ENCODE measurements at regions of chr22 and their contacts with region 1.

Region 1: GRCh38 chr22:31211862-31212730 is at the start of gene LIMK2:
- DNase-seq: peak; percentile 83 to 98
- H3K4me3 ChIP-seq: peak within 1 kb of the TSS; percentile 76 to 96 (median 93)
- H3K27ac ChIP-seq: peak within 1 kb of the TSS; percentile 73; the same call in 1 of the 2 replicates
- H3K4me1 ChIP-seq: peaks cover 0 to 7% (median 4%) of the 10 kb centered on the region in 4 experiments; a peak in 5 of 7 replicates
- H3K27me3 ChIP-seq: no peaks in the 10 kb centered on the region
- CTCF ChIP-seq: peak; percentile 63 to 82 (median 77)
- EP300 ChIP-seq: no peak
- POLR2A ChIP-seq: peak; percentile 87 to 92
- RAD21 ChIP-seq: peak; percentile 56 to 70
- total RNA-seq, gene LIMK2: 37.6 and 41.1 TPM in 2 replicates

Region 2: DNA sequence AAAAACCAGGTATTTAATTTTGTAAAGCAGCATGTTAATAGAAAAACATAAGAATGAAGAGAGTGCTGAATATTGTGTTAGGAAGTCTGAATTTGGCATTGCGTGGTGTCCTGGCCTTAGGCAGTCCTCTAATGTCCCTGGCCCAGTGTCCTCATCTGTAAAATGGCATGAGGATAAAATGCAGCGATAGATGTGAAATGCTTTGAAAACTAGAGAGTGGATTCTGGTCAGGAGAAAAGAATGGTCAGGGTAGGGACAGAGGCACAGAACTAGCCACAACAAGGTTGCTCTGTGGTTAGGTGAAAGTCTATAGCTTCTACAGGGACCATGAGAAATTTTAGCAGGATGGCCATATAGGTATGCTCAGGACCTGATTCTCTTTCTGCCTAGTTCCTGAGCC is 33.2 kb before region 1 on chr22:
- CTCF ChIA-PET with region 1: no interaction called
- POLR2A ChIA-PET with region 1: no interaction called
- DNase-seq: no peak
- H3K4me3 ChIP-seq: no peak overlapping the region
- H3K27ac ChIP-seq: no peak overlapping the region
- H3K4me1 ChIP-seq: no peaks in the 10 kb centered on the region
- H3K27me3 ChIP-seq: no peaks in the 10 kb centered on the region
- CTCF ChIP-seq: no peak
- EP300 ChIP-seq: no peak
- POLR2A ChIP-seq: no peak
- RAD21 ChIP-seq: no peak

Region 3: GRCh38 chr22:31192513-31192912 is 19.6 kb before region 1 on chr22:
- CTCF ChIA-PET with region 1: interaction called, 16 read pairs
- POLR2A ChIA-PET with region 1: interaction called, 4 read pairs
- DNase-seq: no peak
- H3K4me3 ChIP-seq: no peak overlapping the region
- H3K27ac ChIP-seq: no peak overlapping the region
- H3K4me1 ChIP-seq: no peaks in the 10 kb centered on the region
- H3K27me3 ChIP-seq: no peaks in the 10 kb centered on the region
- CTCF ChIP-seq: no peak
- EP300 ChIP-seq: no peak
- POLR2A ChIP-seq: no peak
- RAD21 ChIP-seq: no peak

Region 4: DNA sequence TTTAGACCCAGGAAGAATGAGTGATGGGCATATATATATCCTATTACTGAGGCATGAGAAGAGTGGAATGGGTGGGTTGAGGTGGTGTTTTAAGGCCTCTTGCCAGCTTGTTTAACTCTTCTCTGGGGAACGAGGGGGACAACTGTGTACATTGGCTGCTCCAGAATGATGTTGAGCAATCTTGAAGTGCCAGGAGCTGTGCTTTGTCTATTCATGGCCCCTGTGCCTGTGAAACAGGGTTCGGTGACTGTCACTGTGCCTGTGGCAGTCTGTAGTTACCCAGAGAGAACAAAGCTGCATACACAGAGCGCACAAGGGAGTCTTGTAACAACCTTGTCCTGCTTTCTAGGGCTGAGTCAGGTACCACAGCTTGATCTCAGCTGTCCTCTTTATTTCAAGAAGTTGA is 11.7 kb after region 1 on chr22:
- CTCF ChIA-PET with region 1: interaction called, 77 read pairs
- POLR2A ChIA-PET with region 1: interaction called, 20 read pairs
- DNase-seq: no peak
- H3K4me3 ChIP-seq: no peak overlapping the region
- H3K27ac ChIP-seq: no peak overlapping the region
- H3K4me1 ChIP-seq: no peaks in the 10 kb centered on the region; a peak in 2 of 7 replicates
- H3K27me3 ChIP-seq: no peaks in the 10 kb centered on the region
- CTCF ChIP-seq: no peak
- EP300 ChIP-seq: no peak
- POLR2A ChIP-seq: no peak
- RAD21 ChIP-seq: no peak

Region 5: DNA sequence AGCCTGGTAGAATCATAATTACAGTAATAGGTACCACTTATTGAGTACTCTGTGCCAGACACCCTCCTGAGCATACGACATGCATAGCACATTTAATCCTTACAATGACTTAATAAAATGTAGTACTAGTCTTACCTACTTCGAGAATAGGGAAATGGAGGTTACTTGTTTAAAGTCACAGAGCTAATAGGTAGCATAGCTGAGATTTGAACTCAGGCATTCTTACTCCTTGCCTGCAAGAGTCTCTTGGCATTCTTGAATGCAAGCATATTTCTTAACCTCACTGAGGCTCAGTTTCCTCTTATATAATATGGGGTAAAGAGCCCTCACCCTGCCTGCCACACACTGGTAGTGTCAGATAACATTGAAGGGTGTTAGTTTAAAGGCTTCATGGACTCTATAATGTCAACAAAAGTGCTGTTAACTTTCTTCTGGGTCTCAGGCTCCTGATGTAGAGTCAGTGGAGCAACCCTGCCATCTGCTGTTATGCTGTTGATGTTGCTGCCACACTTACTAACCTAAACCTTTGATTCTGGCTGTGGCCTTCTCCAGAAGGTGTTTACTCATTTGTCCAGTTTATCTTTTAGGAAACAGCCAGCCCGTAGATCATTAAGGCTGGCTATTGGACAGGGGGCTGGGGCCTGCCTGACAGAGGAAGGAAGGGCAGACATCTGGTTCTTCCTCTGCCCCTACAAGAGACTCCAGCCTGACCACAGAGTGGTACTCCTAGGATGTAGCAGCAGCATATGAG is 18.9 kb after region 1 on chr22:
- CTCF ChIA-PET with region 1: interaction called, 77 read pairs
- POLR2A ChIA-PET with region 1: interaction called, 20 read pairs
- DNase-seq: no peak
- H3K4me3 ChIP-seq: no peak overlapping the region
- H3K27ac ChIP-seq: no peak overlapping the region
- H3K4me1 ChIP-seq: peaks cover 0 to 5% (median 2%) of the 10 kb centered on the region in 4 experiments; a peak in 3 of 7 replicates
- H3K27me3 ChIP-seq: no peaks in the 10 kb centered on the region
- CTCF ChIP-seq: peak in 2 of 3 experiments; percentile 33 to 43; a peak in 3 of 4 replicates
- EP300 ChIP-seq: no peak
- POLR2A ChIP-seq: no peak
- RAD21 ChIP-seq: peak; percentile 54 to 62

Region 6: GRCh38 chr22:31248138-31248745 is 36.1 kb after region 1 on chr22:
- CTCF ChIA-PET with region 1: interaction called, 16 read pairs
- POLR2A ChIA-PET with region 1: interaction called, 7 read pairs
- DNase-seq: peak; percentile 67 to 68
- H3K4me3 ChIP-seq: 0 out of 8 replicates have a peak overlapping the region, but pooled peaks of 1 of the 4 experiments have one; percentile 13
- H3K27ac ChIP-seq: no peak overlapping the region
- H3K4me1 ChIP-seq: peaks cover 8 to 13% (median 12%) of the 10 kb centered on the region in 4 experiments
- H3K27me3 ChIP-seq: no peaks in the 10 kb centered on the region
- CTCF ChIP-seq: no peak
- EP300 ChIP-seq: no peak
- POLR2A ChIP-seq: no peak
- RAD21 ChIP-seq: no peak

Measured in H1 (cell line).